Prostate gland (tissue), 2 donors: ENCODE measurements at regions of chr11 and their contacts with region 1.

Region 1: GRCh38 chr11:8006349-8006977 is 19.3 kb downstream of the EIF3F start:
- DNase-seq: peak; percentile 28
- H3K4me3 ChIP-seq: no peak overlapping the region
- H3K27ac ChIP-seq: no peak overlapping the region
- H3K4me1 ChIP-seq: no peaks in the 10 kb centered on the region
- H3K27me3 ChIP-seq: no peaks in the 10 kb centered on the region
- CTCF ChIP-seq: peak; percentile 26 to 74 (median 53)
- POLR2A ChIP-seq: no peak

Region 2: GRCh38 chr11:8092587-8093424 is 86.3 kb after region 1 on chr11:
- intact Hi-C with region 1: loop called (anchors 5 kb)
- DNase-seq: peak; percentile 43
- H3K4me3 ChIP-seq: no peak overlapping the region
- H3K27ac ChIP-seq: no peak overlapping the region
- H3K4me1 ChIP-seq: no peaks in the 10 kb centered on the region
- H3K27me3 ChIP-seq: no peaks in the 10 kb centered on the region
- CTCF ChIP-seq: peak in 3 of 4 experiments; percentile 32 to 62 (median 48)
- POLR2A ChIP-seq: no peak

Region 3: GRCh38 chr11:8149726-8150125 is 143.3 kb after region 1 on chr11:
- intact Hi-C with region 1: no loop called
- DNase-seq: no peak
- H3K4me3 ChIP-seq: no peak overlapping the region
- H3K27ac ChIP-seq: no peak overlapping the region
- H3K4me1 ChIP-seq: no peaks in the 10 kb centered on the region
- H3K27me3 ChIP-seq: no peaks in the 10 kb centered on the region
- CTCF ChIP-seq: no peak
- POLR2A ChIP-seq: no peak